Activated CD4-positive, alpha-beta memory T cell treated with anti-CD3 and anti-CD28 coated beads, Interleukin-2, amount 10 ng/mL, durations not matched to agents 7 days and 5 days (primary cell): ENCODE measurements at regions of chr12 and their contacts with region 1.

Region 1: DNA sequence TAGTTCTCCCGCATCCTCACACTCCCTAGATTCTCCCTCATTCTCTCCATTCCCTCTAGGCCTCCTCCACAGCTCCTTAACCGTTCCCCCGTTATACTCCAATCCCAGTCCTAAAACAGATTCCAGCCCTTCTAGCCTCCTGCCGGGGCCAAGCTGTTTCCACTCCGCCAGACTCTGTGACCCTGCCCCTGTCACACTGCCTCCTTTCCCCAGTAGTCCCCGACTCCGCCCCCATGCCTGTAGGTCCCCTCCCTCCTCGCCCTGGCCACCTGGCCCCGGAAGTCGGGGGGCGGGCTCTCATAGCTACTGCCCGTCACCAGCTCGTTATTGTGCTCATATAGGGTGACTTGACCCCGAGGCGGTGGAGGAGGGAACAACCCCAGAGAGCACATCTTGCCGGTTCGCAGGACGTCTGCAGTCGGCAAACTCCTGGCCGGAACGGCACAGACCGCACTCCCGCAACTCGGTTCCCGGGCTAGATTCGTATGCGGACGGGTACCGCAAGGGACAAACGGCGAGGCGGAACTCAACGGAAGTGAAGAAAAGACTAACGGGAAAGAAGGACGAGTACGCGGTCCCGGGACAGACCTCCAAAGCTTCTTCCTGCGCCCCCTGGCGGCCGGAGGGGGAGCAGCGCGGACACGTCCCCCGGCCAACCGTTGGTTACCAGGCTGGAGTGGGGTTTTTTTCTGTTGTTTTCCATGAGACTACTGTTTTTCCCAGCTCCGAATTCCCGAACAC is at the start of gene AAAS:
- DNase-seq: peak; percentile 97
- H3K4me3 Mint-ChIP-seq: peak within 1 kb of the TSS; percentile 90
- H3K27ac Mint-ChIP-seq: peak within 1 kb of the TSS; percentile 95
- H3K4me1 Mint-ChIP-seq: peaks cover 46% of the 10 kb centered on the region
- H3K27me3 Mint-ChIP-seq: no peaks in the 10 kb centered on the region
- total RNA-seq, gene AAAS: 63.2 to 63.8 TPM

Region 2: DNA sequence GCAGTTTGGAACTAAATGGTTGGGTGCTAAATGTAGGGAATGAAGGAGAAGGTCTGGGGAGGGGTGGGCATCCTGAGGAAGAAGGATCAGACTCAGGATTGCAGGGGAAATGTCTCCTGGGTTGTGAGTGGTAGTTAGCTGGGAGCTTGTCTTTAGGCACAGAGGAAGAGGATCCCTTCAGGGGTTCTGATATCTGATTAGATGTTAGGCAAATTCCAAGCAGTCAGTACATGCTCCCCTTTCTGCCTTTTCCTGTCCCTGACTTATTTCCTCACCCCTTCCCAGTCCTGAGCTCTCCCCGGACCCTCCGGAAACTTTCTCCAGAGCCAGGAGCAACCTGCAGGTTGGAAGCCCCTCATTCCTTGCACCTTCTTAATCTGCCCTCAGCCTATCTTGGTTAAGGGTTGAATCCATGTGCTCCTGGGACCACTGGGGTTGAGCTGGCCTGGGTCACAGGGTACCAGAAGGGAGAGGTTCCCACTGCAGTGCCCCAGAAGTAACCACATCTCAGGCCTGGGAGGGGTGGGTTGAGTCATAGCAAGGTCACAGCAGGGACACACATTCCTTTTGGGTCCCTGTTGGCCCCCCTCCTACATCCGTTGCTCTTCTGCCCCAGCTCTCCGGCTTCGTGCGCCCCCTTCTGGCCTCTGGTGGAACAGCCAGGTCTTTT is 222.1 kb before region 1 on chr12:
- CTCF ChIA-PET with region 1: interaction called, 14 read pairs
- POLR2A ChIA-PET with region 1: interaction called, 3 read pairs
- DNase-seq: peak; percentile 90
- H3K4me3 Mint-ChIP-seq: peak overlapping the region; percentile 71
- H3K27ac Mint-ChIP-seq: peak overlapping the region; percentile 69
- H3K4me1 Mint-ChIP-seq: peaks cover 52% of the 10 kb centered on the region
- H3K27me3 Mint-ChIP-seq: peaks cover 15% of the 10 kb centered on the region

Region 3: DNA sequence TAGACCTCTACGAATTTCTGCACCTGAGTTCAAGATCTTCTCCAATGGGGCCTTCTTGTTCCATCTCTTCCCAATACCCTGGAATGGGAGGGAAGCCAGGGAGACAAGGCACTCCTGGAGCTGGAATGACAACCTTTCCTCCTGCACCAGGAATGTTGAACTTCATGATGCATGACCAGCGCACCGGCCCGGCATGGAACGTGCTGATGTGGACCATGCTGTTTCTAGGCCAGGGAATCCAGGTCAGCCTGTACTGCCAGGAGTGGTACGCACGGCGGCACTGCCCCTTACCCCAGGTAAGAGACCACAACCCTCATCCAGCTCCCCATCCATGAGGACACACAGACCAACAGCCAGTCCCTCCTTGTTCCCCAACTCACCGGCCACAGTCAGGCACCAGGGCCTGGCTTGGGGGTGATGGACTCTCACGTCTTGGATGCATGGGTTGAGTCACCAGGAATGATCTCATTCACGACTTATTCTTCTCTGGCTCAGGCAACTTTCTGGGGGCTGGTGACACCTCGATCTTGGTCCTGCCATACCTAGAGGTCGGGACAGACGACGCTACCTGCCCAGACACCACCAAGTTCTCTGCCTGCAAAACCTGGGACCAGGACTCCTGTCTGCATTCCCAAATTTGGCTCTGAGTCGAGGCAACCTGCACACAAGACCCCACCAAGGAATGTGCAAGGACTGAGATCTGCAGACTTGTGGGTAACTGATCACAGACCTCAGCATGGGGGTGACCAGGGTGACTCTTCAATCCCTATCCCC is 197.5 kb before region 1 on chr12:
- CTCF ChIA-PET with region 1: no interaction called
- POLR2A ChIA-PET with region 1: no interaction called
- DNase-seq: no peak
- H3K4me3 Mint-ChIP-seq: no peak overlapping the region
- H3K27ac Mint-ChIP-seq: no peak overlapping the region
- H3K4me1 Mint-ChIP-seq: peaks cover 2% of the 10 kb centered on the region
- H3K27me3 Mint-ChIP-seq: peaks cover 4% of the 10 kb centered on the region

Region 4: DNA sequence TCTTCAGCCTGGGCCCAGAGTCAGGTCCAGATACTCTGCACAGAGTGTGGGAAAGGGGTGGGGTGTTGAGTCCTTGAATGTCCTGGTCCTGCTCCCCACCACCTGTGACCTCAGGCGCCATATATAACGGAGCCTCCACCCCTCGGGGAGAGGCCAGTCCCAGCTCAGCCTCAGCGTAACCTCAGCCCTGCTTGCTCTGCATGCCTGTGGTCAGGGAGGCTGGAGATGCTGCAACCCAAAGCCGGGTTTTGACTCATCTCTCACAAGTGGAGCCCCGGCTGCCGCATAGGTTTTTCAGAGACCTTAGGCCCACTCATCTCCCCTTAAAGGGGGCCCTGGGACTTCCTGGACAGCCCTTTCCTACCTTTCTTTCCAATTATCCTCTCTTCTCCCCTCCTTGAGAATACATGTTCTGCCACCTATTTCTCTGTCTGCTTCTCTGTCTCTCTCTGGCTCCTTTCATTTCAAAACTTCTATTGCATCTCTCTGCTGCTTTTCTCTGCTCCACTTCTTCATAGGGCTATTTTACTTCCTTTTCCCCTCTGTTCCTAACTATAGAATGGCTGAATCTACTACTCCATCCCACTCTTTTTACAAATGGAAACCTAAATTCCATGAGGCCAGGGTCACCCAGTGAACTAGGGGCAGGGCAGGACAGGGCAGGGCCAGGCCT is 115.4 kb before region 1 on chr12:
- CTCF ChIA-PET with region 1: interaction called, 144 read pairs
- POLR2A ChIA-PET with region 1: interaction called, 18 read pairs
- DNase-seq: peak; percentile 90
- H3K4me3 Mint-ChIP-seq: peak overlapping the region; percentile 78
- H3K27ac Mint-ChIP-seq: peak overlapping the region; percentile 84
- H3K4me1 Mint-ChIP-seq: peaks cover 82% of the 10 kb centered on the region
- H3K27me3 Mint-ChIP-seq: no peaks in the 10 kb centered on the region

Region 5: GRCh38 chr12:53267999-53268647 is 53.1 kb before region 1 on chr12 and contains the start of gene ESPL1:
- CTCF ChIA-PET with region 1: interaction called, 66 read pairs
- POLR2A ChIA-PET with region 1: interaction called, 39 read pairs
- DNase-seq: peak; percentile 87
- H3K4me3 Mint-ChIP-seq: peak within 1 kb of the TSS; percentile 98
- H3K27ac Mint-ChIP-seq: peak within 1 kb of the TSS; percentile 90
- H3K4me1 Mint-ChIP-seq: peaks cover 53% of the 10 kb centered on the region
- H3K27me3 Mint-ChIP-seq: no peaks in the 10 kb centered on the region
- total RNA-seq, gene ESPL1: 88.4 to 90.2 TPM

Region 6: DNA sequence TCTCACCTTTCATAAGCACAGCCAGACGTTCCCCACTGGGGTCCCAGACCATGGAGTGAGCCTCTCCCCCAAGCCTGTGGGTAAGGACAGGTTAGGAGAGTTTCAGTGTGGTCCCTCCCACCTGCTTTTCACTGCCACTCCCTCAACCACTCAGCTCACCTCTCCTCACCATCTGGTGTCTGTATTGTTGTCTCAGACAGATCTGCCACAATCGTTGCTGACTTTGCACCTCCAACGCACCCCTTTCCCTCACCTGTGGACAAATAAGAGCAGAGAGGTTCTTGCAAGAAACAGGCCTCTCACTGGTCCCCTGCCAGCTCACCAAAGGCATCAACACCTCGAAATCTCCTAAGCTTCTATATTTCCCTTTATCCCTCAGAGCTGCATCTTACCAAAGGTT is 13.0 kb before region 1 on chr12:
- CTCF ChIA-PET with region 1: interaction called, 22 read pairs
- POLR2A ChIA-PET with region 1: interaction called, 141 read pairs
- DNase-seq: no peak
- H3K4me3 Mint-ChIP-seq: no peak overlapping the region
- H3K27ac Mint-ChIP-seq: no peak overlapping the region
- H3K4me1 Mint-ChIP-seq: peaks cover 1% of the 10 kb centered on the region
- H3K27me3 Mint-ChIP-seq: no peaks in the 10 kb centered on the region

Region 7: GRCh38 chr12:53352331-53353256 is 31.4 kb after region 1 on chr12:
- CTCF ChIA-PET with region 1: interaction called, 110 read pairs
- POLR2A ChIA-PET with region 1: interaction called, 4 read pairs
- DNase-seq: peak; percentile 87
- H3K4me3 Mint-ChIP-seq: no peak overlapping the region
- H3K27ac Mint-ChIP-seq: no peak overlapping the region
- H3K4me1 Mint-ChIP-seq: peaks cover 5% of the 10 kb centered on the region
- H3K27me3 Mint-ChIP-seq: no peaks in the 10 kb centered on the region

Region 8: DNA sequence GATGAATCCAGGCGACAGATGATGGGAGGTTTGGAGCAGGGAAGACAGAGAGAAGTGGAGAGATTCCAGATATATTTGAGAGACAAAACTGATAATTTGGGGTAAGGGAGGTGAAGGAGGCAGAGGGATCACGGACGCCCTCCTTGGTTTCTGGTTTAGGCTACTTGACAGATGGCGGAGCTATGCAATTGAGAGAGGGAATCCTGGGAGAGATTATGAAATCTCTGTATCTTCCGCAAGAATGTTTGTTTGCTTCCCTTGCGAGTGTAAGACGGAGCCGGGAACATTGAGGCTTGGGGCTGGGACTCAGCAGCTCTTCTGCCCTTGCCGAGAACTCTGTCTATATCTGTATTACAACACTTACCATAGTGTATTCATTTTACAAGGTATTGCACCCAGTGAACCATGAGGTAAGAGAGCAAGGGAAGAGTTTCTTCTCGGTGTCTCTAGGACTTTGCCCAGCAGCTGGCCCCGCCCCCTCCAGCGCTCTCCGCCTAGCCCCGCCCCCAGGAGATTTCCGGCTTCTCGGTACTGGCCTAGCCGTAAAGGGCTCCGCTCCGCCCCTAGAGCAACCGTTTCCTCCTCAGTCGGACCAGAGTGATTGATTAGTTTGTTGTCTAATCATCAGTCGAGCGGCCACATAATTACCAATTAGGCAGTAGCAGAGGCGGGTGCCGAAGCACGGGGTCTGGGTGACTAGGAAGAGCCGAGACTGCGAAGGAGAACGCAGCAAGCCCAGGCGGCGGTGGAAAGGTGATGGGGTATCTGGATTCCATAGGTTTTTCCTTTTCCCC is 120.0 kb after region 1 on chr12 and contains the start of gene PRR13:
- CTCF ChIA-PET with region 1: interaction called, 11 read pairs
- POLR2A ChIA-PET with region 1: interaction called, 5 read pairs
- DNase-seq: peak; percentile 99
- H3K4me3 Mint-ChIP-seq: peak within 1 kb of the TSS; percentile 90
- H3K27ac Mint-ChIP-seq: peak within 1 kb of the TSS; percentile 88
- H3K4me1 Mint-ChIP-seq: peaks cover 43% of the 10 kb centered on the region
- H3K27me3 Mint-ChIP-seq: no peaks in the 10 kb centered on the region
- total RNA-seq, gene PRR13: 242 to 246 TPM